Activated B cell treated with CpG ODN at 0.5 μM for 24 hours (primary cell): ENCODE measurements at regions of chr22 and their contacts with region 1.

Region 1: GRCh38 chr22:49827853-49828598 is at the start of gene BRD1:
- DNase-seq: peak; percentile 66
- ATAC-seq: peak; percentile 78
- H3K4me3 Mint-ChIP-seq: peak within 1 kb of the TSS; percentile 84
- H3K27ac Mint-ChIP-seq: peak within 1 kb of the TSS; percentile 63
- H3K4me1 Mint-ChIP-seq: peaks cover 47% of the 10 kb centered on the region
- H3K27me3 Mint-ChIP-seq: peaks cover 4% of the 10 kb centered on the region
- CTCF ChIP-seq: no peak
- total RNA-seq, gene BRD1: 37.5 and 45.8 TPM in 2 replicates

Region 2: DNA sequence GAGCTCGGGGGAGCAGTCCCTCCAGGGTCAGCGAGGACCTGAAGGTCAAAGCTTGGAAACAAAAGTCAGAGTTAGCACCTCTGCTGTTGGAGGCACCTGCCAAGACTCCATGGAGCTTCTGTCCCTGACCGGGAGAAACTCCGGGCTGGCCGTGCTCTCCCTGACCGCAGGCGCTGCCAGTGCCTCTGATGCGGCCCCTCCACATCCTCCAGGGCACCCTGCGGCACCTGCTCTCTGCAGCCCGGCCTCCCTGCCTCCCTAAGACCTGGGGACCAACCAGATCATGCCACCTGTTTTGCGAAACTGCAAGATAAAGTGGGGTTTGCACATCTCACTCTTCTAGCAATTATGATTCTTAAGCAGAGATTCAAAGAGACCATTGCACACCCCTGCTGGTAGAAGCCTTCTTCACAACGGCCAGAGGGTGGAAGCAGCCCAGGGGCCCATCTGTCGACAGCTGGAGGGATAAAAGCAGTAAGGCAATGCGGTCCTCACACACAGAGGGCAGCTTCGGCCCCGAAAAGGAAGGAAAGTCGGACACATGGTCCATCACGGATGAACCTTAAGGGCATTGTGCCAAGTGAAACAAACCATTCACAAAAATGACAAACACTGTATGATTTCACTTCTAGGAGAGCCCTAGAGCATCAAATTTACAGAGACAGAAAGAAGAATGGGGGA is 477.4 kb before region 1 on chr22:
- CTCF ChIA-PET with region 1: no interaction called
- POLR2A ChIA-PET with region 1: no interaction called
- intact Hi-C with region 1: no loop called
- DNase-seq: no peak
- ATAC-seq: no peak
- H3K4me3 Mint-ChIP-seq: no peak overlapping the region
- H3K27ac Mint-ChIP-seq: no peak overlapping the region
- H3K4me1 Mint-ChIP-seq: no peaks in the 10 kb centered on the region
- H3K27me3 Mint-ChIP-seq: peaks cover 12% of the 10 kb centered on the region
- CTCF ChIP-seq: no peak

Region 3: GRCh38 chr22:49917974-49918910 is 90.2 kb after region 1 on chr22 and contains the starts of genes ALG12 and CRELD2:
- CTCF ChIA-PET with region 1: no interaction called
- POLR2A ChIA-PET with region 1: interaction called, 5 read pairs
- intact Hi-C with region 1: loop called (anchors 2 kb)
- DNase-seq: peak; percentile 95
- ATAC-seq: peak; percentile 98
- H3K4me3 Mint-ChIP-seq: peak within 1 kb of the TSS; percentile 84
- H3K27ac Mint-ChIP-seq: peak within 1 kb of the TSS; percentile 80
- H3K4me1 Mint-ChIP-seq: peaks cover 34% of the 10 kb centered on the region
- H3K27me3 Mint-ChIP-seq: no peaks in the 10 kb centered on the region
- CTCF ChIP-seq: no peak
- total RNA-seq, gene ALG12: 15.5 and 18.2 TPM in 2 replicates
- total RNA-seq, gene CRELD2: 44.5 and 45.0 TPM in 2 replicates